ENCODE measurements at regions of chr1 and their contacts with region 1.

Region 1: GRCh38 chr1:183023601-183024316 is 539 bp downstream of the LAMC1 start:
- DNase-seq: peak; percentile 57 to 63
- ATAC-seq: peak; percentile 26 to 70 (median 44)
- H3K4me3 ChIP-seq: peak overlapping the region; percentile 55 to 98 (median 83)
- H3K27ac ChIP-seq: peak overlapping the region; percentile 99 to 100 (median 100)
- H3K4me1 ChIP-seq: peaks cover 3 to 70% (median 59%) of the 10 kb centered on the region in 9 donors
- H3K27me3 ChIP-seq: peaks cover 0 to 19% (median 0%) of the 10 kb centered on the region in 7 donors
- CTCF ChIP-seq: peak in 8 of 9 donors; percentile 13 to 63 (median 45)

Region 2: GRCh38 chr1:183070923-183071618 is 47.3 kb after region 1 on chr1:
- intact Hi-C with region 1: loop called in 1 of 10 experiments (anchors 10 kb)
- DNase-seq: no peak
- ATAC-seq: peak in 6 of 8 donors; percentile 18 to 66 (median 50)
- H3K4me3 ChIP-seq: no peak overlapping the region
- H3K27ac ChIP-seq: peak overlapping the region in 7 of 10 donors; percentile 12 to 54 (median 34)
- H3K4me1 ChIP-seq: peaks cover 9 to 80% (median 66%) of the 10 kb centered on the region in 9 donors
- H3K27me3 ChIP-seq: no peaks in the 10 kb centered on the region
- CTCF ChIP-seq: no peak

Region 3: DNA sequence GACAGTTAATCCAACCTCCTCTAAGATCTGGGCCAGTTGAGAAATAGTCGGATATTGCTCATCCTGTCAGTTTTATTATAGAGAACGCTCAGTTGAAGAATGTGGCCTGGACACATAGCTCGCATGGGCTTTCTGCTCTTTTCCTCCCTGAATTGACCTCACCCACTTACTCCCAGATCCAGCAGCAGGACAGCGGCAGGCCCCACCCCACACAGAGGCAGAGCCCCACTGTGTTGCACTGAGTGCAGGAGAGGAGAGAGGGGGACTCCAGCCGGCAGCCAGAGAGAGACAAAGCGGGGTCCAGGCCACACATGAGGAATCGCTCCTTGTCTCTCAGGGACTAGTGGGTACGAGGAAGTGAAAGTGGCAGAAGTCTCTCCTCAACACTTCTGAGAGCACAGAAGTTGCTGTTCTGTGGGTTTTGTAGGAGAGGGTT is 78.1 kb after region 1 on chr1:
- intact Hi-C with region 1: loop called in 6 of 10 experiments (anchors 5 to 10 kb)
- DNase-seq: no peak
- ATAC-seq: peak in 4 of 8 donors; percentile 14 to 62 (median 50)
- H3K4me3 ChIP-seq: no peak overlapping the region
- H3K27ac ChIP-seq: peak overlapping the region in 3 of 10 donors; percentile 30 to 49 (median 45)
- H3K4me1 ChIP-seq: peaks cover 0 to 97% (median 84%) of the 10 kb centered on the region in 9 donors
- H3K27me3 ChIP-seq: no peaks in the 10 kb centered on the region
- CTCF ChIP-seq: no peak

Region 4: DNA sequence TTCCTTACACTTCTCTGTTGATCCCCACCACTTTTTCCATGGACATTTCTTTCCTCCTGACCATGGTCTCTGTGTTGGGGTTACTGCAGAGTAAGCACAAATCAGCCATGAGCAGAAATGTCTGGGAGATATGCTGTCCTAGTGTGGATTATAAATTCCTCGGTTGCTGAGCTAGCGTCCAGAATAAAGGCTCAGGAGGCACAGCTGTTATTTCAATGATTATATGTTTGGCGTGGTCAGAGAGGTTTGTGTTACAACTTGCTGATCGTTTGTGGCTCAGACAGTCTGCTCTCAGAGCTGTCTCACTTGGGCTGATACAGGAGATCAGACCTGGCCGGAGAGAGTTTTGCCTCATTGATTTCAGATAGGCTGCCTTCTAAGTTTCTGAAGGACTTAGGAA is 124.8 kb after region 1 on chr1:
- intact Hi-C with region 1: loop called in 1 of 10 experiments (anchors 5 kb)
- DNase-seq: no peak
- ATAC-seq: peak in 7 of 8 donors; percentile 58 to 81 (median 70)
- H3K4me3 ChIP-seq: no peak overlapping the region
- H3K27ac ChIP-seq: peak overlapping the region in 8 of 10 donors; percentile 24 to 74 (median 38)
- H3K4me1 ChIP-seq: peaks cover 0 to 20% (median 14%) of the 10 kb centered on the region in 9 donors
- H3K27me3 ChIP-seq: no peaks in the 10 kb centered on the region
- CTCF ChIP-seq: no peak

Region 5: GRCh38 chr1:183234660-183235476 is 211.1 kb after region 1 on chr1:
- intact Hi-C with region 1: loop called in 4 of 10 experiments (anchors 5 to 10 kb)
- DNase-seq: peak; percentile 34 to 69
- ATAC-seq: peak; percentile 86 to 94 (median 90)
- H3K4me3 ChIP-seq: peak overlapping the region in 9 of 10 donors; percentile 1 to 42 (median 33)
- H3K27ac ChIP-seq: peak overlapping the region; percentile 47 to 88 (median 72)
- H3K4me1 ChIP-seq: peaks cover 0 to 32% (median 19%) of the 10 kb centered on the region in 9 donors
- H3K27me3 ChIP-seq: no peaks in the 10 kb centered on the region
- CTCF ChIP-seq: peak; percentile 35 to 72 (median 61)

Measured in heart right ventricle (tissue), 16 donors.